Endothelial cell of umbilical vein (primary cell): ENCODE measurements at regions of chr1 and their contacts with region 1.

Region 1: GRCh38 chr1:209884665-209885117 is 53.3 kb upstream of the SYT14 start:
- DNase-seq: peak; percentile 97
- H3K4me3 ChIP-seq: no peak overlapping the region
- H3K27ac ChIP-seq: peak overlapping the region; percentile 71
- H3K4me1 ChIP-seq: peaks cover 21% of the 10 kb centered on the region
- H3K27me3 ChIP-seq: peaks cover 0 to 7% of the 10 kb centered on the region in 2 experiments
- CTCF ChIP-seq: no peak
- POLR2A ChIP-seq: peak; percentile 40

Region 2: DNA sequence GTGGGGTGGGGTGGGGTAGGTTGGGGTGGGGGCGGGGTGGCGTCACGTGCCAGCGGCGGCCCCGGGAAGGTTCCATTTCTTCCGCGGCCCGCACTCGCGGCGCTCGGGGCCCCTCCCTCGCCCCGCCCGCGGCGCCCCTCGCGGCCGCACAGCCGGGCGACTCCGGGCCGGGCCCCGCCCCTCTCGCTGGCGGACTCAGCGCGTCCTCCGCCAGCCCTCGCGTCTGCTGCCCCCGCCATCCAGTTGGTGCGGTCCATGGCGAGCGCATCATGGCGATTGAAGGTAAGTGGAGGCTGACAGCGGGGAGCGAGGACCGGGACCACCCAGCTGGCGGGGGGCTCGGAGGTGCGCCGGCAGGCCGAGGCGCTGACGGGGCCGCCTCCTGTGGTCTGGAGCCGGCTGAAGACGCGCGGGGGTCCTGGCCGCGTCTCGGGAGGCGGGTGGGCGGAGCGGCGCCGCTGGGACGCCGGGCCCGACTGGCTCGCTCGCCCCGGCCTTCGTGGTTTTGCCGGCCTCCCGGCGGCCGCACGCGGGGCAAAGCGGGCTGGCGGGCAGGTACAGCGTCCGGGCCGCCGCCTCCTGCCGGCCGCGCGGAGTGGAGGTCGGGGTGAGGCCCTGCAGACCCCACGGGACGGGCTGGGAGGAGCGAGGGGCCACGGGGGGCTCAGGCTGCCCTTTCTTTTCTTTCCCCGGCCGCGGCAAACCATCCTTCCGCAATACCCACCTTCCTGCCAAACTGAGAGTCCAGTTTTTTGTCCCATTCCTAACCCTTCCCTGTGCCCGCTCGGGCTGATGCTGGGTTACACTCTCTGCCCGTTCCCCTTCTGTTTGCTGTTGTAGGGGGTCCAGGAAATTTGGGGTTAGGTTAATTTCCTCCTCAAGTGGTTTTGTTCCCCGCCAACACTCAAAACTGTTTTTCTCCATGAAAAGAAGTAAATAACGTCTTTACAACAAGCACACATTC is 53.6 kb after region 1 on chr1 and contains the start of gene SYT14:
- CTCF ChIA-PET with region 1: no interaction called
- POLR2A ChIA-PET with region 1: no interaction called
- dilution Hi-C with region 1: no loop called
- intact Hi-C with region 1: loop called (anchors 5 kb)
- DNase-seq: peak; percentile 14
- H3K4me3 ChIP-seq: peak within 1 kb of the TSS in 2 of 3 experiments; percentile 10 to 49
- H3K27ac ChIP-seq: no peak within 1 kb of the TSS
- H3K4me1 ChIP-seq: peaks cover 11% of the 10 kb centered on the region
- H3K27me3 ChIP-seq: peaks cover 11 to 37% of the 10 kb centered on the region in 2 experiments
- CTCF ChIP-seq: no peak
- POLR2A ChIP-seq: no peak
- total RNA-seq, gene SYT14: 0.18 and 0.30 TPM in 2 replicates